A549 (cell line): ENCODE measurements at regions of chr17 and their contacts with region 1.

Region 1: DNA sequence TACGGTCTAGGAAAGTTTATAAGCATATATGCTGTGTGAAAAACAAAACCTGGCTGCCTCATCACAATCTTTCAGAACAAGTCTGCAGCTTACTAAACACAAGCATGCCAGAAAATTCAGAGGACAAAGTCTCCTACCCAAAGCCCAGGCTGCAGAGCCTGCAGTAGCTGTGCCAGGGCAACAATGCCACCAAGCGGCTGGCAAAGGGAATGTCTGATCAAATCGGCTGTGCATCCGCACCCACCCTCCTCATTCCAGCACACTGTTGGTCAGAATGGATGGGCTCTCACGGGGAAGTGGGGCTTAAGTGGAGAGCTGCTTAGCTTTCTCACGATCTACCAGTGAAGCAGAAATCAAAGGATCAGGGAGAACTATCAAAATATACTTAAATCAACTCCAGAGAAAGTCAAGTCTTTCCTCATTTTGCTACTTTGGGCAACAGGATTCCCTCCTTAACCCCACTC is 73.5 kb downstream of the CYTH1 start:
- DNase-seq: peak; percentile 92 to 99
- ATAC-seq: peak; percentile 97 to 98
- H3K4me3 ChIP-seq: no peak overlapping the region
- H3K27ac ChIP-seq: peak overlapping the region; percentile 78 to 88
- H3K4me1 ChIP-seq: peaks cover 48% of the 10 kb centered on the region
- CTCF ChIP-seq: peak; percentile 99
- EP300 ChIP-seq: no peak; a peak in 1 of 5 replicates
- POLR2A ChIP-seq: no peak
- RAD21 ChIP-seq: peak; percentile 100

Region 2: GRCh38 chr17:78484300-78485246 is 224.0 kb before region 1 on chr17:
- CTCF ChIA-PET with region 1: interaction called, 71 read pairs
- POLR2A ChIA-PET with region 1: no interaction called
- DNase-seq: peak; percentile 58 to 93
- ATAC-seq: peak; percentile 89 to 97
- H3K4me3 ChIP-seq: peak overlapping the region; percentile 86
- H3K27ac ChIP-seq: peak overlapping the region; percentile 86 to 90
- H3K4me1 ChIP-seq: peaks cover 15% of the 10 kb centered on the region
- CTCF ChIP-seq: no peak
- EP300 ChIP-seq: no peak
- POLR2A ChIP-seq: peak; percentile 84
- RAD21 ChIP-seq: no peak

Region 3: DNA sequence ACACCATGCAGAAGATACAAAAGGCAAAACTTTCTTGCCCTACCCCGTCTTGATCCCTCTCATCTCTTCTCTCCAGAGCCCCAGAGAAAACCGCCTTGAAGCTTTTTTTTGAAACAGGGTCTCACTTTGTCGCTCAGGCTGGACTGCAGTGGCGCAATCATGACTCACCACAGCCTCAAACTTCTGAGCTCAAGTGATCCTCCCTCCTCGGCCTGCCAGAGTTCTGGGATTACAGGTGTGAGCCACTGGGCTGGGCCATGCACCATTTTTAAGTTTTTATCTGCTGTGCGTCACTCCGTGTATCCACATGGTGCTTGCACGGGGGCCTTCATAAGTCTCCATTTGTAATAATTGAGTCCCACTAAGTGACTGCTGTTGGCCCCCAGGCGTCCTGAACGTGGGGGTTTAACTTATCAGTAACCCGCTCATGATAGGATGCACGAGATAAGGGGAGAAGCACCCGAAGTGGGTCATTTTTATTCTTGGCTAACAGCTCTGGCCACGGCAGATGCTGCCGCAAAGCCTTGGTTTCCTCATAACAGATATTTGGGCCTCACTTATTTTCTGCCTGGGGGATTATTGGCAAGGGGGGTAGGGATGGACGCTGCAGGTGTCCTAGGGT is 139.9 kb before region 1 on chr17:
- CTCF ChIA-PET with region 1: interaction called, 15 read pairs
- POLR2A ChIA-PET with region 1: no interaction called
- DNase-seq: peak in 1 of 2 experiments; percentile 52
- ATAC-seq: peak; percentile 45 to 71; a peak in 4 of 6 replicates
- H3K4me3 ChIP-seq: no peak overlapping the region
- H3K27ac ChIP-seq: peak overlapping the region; percentile 9 to 76; a peak in 5 of 6 replicates
- H3K4me1 ChIP-seq: peaks cover 13% of the 10 kb centered on the region
- CTCF ChIP-seq: no peak
- EP300 ChIP-seq: no peak
- POLR2A ChIP-seq: no peak
- RAD21 ChIP-seq: no peak

Region 4: GRCh38 chr17:78611607-78612006 is 96.9 kb before region 1 on chr17:
- CTCF ChIA-PET with region 1: interaction called, 33 read pairs
- POLR2A ChIA-PET with region 1: no interaction called
- DNase-seq: no peak
- ATAC-seq: no peak
- H3K4me3 ChIP-seq: no peak overlapping the region
- H3K27ac ChIP-seq: peak overlapping the region in 1 of 2 experiments; percentile 4; a peak in 2 of 6 replicates
- H3K4me1 ChIP-seq: 0 out of 3 replicates have a peak, but pooled peaks cover 4% of the 10 kb centered on the region
- CTCF ChIP-seq: no peak
- EP300 ChIP-seq: no peak
- POLR2A ChIP-seq: no peak
- RAD21 ChIP-seq: no peak

Region 5: GRCh38 chr17:78674595-78675315 is 33.8 kb before region 1 on chr17:
- CTCF ChIA-PET with region 1: interaction called, 69 read pairs
- POLR2A ChIA-PET with region 1: interaction called, 3 read pairs
- DNase-seq: no peak
- ATAC-seq: peak in 1 of 2 experiments; percentile 44; a peak in 3 of 6 replicates
- H3K4me3 ChIP-seq: no peak overlapping the region
- H3K27ac ChIP-seq: peak overlapping the region in 1 of 2 experiments; percentile 65; a peak in 3 of 6 replicates
- H3K4me1 ChIP-seq: peaks cover 48% of the 10 kb centered on the region
- CTCF ChIP-seq: no peak
- EP300 ChIP-seq: no peak
- POLR2A ChIP-seq: no peak
- RAD21 ChIP-seq: no peak

Region 6: GRCh38 chr17:78745407-78746088 is 37.0 kb after region 1 on chr17:
- CTCF ChIA-PET with region 1: interaction called, 35 read pairs
- POLR2A ChIA-PET with region 1: no interaction called
- DNase-seq: peak in 1 of 2 experiments; percentile 55
- ATAC-seq: peak; percentile 41 to 57; a peak in 3 of 6 replicates
- H3K4me3 ChIP-seq: no peak overlapping the region
- H3K27ac ChIP-seq: peak overlapping the region in 1 of 2 experiments; percentile 50; a peak in 2 of 6 replicates
- H3K4me1 ChIP-seq: peaks cover 23% of the 10 kb centered on the region; the same call in 2 of the 3 replicates
- CTCF ChIP-seq: peak; percentile 92
- EP300 ChIP-seq: no peak
- POLR2A ChIP-seq: no peak
- RAD21 ChIP-seq: peak; percentile 63 to 72